ENCODE measurements at regions of chr15 and their contacts with region 1.

Region 1: GRCh38 chr15:88546248-88547129 is at the start of gene DET1:
- DNase-seq: peak; percentile 95 to 97 (median 96)
- ATAC-seq: peak; percentile 98 to 99 (median 99)
- H3K4me3 ChIP-seq: peak within 1 kb of the TSS; percentile 37 to 83 (median 78)
- H3K27ac ChIP-seq: peak within 1 kb of the TSS; percentile 82 to 97 (median 92)
- H3K4me1 ChIP-seq: peaks cover 0 to 46% (median 21%) of the 10 kb centered on the region in 12 donors
- H3K27me3 ChIP-seq: no peaks in the 10 kb centered on the region
- CTCF ChIP-seq: peak; percentile 64 to 91 (median 78)
- POLR2A ChIP-seq: peak in 1 of 2 donors; percentile 27
- total RNA-seq, gene DET1: 6.2 to 12.4 (median 8.7) TPM

Region 2: DNA sequence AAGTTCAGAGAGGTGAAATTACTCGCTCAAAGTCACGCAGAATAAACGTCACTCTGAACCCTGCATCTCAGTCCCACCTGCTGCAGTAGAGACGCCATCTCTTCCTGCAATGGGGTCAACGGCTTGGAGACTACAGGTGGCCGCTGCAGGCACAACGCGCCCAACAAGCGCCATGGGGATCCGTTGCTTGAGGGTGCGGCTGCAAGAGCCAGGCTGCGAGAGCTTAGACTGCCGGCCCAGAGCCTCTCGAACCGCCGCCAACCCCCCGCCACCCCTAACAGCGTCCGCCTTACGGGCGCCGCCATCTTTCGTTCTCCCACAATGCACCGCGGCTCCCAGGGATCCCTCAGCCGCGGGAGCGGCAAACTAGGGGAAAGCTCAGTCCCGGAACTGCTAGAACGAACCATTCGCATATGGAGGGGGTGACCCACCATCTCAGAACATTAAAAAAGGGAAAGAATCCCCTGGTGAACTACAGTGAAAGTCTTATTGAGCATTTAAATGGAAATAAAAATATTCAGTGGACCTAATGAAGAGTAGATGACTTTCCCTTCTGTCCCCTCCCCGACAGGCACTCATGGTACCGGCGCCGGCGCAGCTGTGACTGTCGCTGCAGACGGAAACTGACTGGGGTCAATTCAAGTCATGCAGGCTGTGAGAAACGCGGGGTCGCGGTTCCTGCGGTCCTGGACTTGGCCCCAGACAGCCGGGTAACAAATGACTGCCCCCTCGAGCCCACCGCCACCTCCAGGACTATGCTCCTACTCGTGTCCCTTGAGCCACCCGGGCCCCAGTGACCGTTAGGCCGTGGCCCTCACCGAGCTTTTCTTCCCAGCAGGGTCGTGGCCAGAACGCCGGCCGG is 79.2 kb before region 1 on chr15 and contains the starts of genes MRPL46 and MRPS11:
- intact Hi-C with region 1: loop called in 1 of 10 experiments (anchors 2 kb)
- DNase-seq: peak; percentile 91 to 94 (median 92)
- ATAC-seq: peak; percentile 90 to 97 (median 96)
- H3K4me3 ChIP-seq: peak within 1 kb of the TSS; percentile 65 to 99 (median 83)
- H3K27ac ChIP-seq: peak within 1 kb of the TSS; percentile 87 to 98 (median 93)
- H3K4me1 ChIP-seq: peaks cover 6 to 45% (median 30%) of the 10 kb centered on the region in 12 donors
- H3K27me3 ChIP-seq: no peaks in the 10 kb centered on the region
- CTCF ChIP-seq: no peak
- POLR2A ChIP-seq: peak in 1 of 2 donors; percentile 23
- total RNA-seq, gene MRPL46: 40.7 to 113 (median 75.2) TPM
- total RNA-seq, gene MRPS11: 49.7 to 72.7 (median 59.0) TPM

Region 3: DNA sequence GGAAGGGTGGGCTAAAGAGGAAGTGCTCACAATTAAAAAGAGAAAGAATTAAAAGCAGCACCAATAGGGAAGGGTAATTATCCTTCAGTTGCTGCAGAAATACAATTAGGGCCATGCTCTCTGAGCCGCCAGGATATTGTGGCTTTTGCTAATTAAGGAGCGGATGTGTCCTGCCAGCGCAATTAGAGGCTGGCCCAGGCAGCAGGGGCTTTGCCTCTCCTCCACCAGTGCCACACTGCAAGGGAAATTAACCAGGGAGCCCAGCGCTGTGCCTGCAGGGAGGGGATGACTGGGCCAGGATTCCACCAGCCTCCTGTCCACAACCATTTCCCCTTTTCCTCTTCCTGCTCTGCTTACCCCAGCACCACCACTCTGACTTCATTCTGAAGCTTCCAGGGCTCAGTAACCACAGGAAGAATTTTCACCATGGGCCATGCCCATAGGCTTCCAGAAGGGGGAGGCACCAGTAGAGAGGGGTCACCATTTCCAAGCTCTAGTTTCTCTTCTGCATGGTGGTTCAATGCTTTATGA is 64.3 kb after region 1 on chr15:
- intact Hi-C with region 1: loop called in 1 of 10 experiments (anchors 10 kb)
- DNase-seq: no peak
- ATAC-seq: no peak
- H3K4me3 ChIP-seq: no peak overlapping the region
- H3K27ac ChIP-seq: no peak overlapping the region
- H3K4me1 ChIP-seq: peaks cover 0 to 3% (median 0%) of the 10 kb centered on the region in 12 donors
- H3K27me3 ChIP-seq: peaks cover 4 to 29% (median 15%) of the 10 kb centered on the region in 9 donors
- CTCF ChIP-seq: no peak
- POLR2A ChIP-seq: no peak

Region 4: GRCh38 chr15:88769161-88769971 is 222.9 kb after region 1 on chr15:
- intact Hi-C with region 1: no loop called
- DNase-seq: no peak
- ATAC-seq: no peak
- H3K4me3 ChIP-seq: peak overlapping the region in 4 of 12 donors; percentile 10 to 32 (median 16)
- H3K27ac ChIP-seq: no peak overlapping the region
- H3K4me1 ChIP-seq: peaks cover 0 to 6% (median 0%) of the 10 kb centered on the region in 12 donors
- H3K27me3 ChIP-seq: peaks cover 0 to 55% (median 22%) of the 10 kb centered on the region in 9 donors
- CTCF ChIP-seq: no peak
- POLR2A ChIP-seq: no peak

Measured in heart left ventricle (tissue), 16 donors.